ENCODE measurements at regions of chr14 and their contacts with region 1.

Region 1: GRCh38 chr14:20327005-20327869 is 5.8 kb downstream of the CCNB1IP1 start:
- DNase-seq: peak in 1 of 3 donors; percentile 64
- ATAC-seq: peak; percentile 84
- H3K4me3 ChIP-seq: no peak overlapping the region
- H3K4me1 ChIP-seq: peaks cover 2% of the 10 kb centered on the region
- CTCF ChIP-seq: peak; percentile 48

Region 2: DNA sequence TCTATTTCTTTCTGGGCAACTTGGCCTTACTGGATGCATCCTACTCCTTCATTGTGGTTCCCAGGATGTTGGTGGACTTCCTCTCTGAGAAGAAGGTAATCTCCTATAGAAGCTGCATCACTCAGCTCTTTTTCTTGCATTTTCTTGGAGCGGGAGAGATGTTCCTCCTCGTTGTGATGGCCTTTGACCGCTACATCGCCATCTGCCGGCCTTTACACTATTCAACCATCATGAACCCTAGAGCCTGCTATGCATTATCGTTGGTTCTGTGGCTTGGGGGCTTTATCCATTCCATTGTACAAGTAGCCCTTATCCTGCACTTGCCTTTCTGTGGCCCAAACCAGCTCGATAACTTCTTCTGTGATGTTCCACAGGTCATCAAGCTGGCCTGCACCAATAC is 183.3 kb before region 1 on chr14:
- intact Hi-C with region 1: no loop called
- DNase-seq: no peak
- ATAC-seq: no peak
- H3K4me3 ChIP-seq: no peak overlapping the region
- H3K4me1 ChIP-seq: no peaks in the 10 kb centered on the region
- CTCF ChIP-seq: no peak

Region 3: DNA sequence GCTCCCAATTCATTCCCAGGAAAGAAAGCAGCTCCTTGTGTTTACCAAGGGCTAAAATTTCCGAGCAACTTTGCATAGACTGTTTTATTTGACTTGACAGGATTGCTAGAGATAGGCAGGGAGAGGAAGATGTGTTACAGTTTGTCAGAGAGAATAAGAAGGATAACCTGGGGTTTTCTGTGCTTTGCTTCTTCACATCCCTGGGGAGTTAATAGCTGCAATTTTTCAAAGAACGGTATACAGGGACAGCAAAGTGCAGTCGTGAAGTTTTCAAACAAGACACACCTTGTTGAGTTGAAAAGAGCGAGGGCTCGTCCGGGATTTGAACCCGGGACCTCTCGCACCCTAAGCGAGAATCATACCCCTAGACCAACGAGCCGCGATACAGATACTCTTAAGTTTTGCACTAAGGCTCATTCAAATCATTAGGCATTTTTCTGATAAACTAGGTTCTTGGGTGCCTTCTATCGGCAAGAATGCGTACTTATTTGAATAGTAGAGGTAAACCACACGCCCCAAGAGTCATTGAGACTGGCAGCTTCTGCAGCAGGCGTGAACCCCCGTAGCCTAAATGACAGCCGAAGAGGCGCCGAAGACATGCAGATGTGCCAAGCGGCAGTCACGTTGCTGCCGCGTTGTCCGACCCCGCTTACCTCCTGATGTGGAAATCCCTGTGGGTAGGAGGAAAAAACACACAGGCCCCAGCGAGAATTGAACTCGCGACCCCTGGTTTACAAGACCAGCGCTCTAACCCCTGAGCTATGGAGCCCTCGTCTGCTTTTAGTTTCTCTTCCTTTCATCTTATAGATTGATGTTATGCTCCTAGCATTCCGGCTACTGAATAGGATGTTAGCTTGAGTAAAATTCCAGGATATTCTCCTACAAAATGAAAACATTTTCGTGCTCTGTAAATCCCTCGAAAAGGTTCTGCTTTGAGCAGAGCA is 286.1 kb after region 1 on chr14:
- intact Hi-C with region 1: loop called in 1 of 2 experiments (anchors 5 kb)
- DNase-seq: peak; percentile 85 to 92 (median 86)
- ATAC-seq: peak; percentile 85
- H3K4me3 ChIP-seq: peak overlapping the region; percentile 6
- H3K4me1 ChIP-seq: peaks cover 12% of the 10 kb centered on the region
- CTCF ChIP-seq: peak; percentile 42

Measured in mucosa of descending colon (tissue), 3 donors.